IMR-90 (cell line): ENCODE measurements at regions of chr6 and their contacts with region 1.

Region 1: GRCh38 chr6:155738602-155739105 is 283.0 kb upstream of the NOX3 start:
- DNase-seq: no peak
- ATAC-seq: no peak
- H3K4me3 ChIP-seq: no peak overlapping the region
- H3K27ac ChIP-seq: no peak overlapping the region
- H3K4me1 ChIP-seq: 0 out of 2 replicates have a peak, but pooled peaks cover 2% of the 10 kb centered on the region
- H3K27me3 ChIP-seq: no peaks in the 10 kb centered on the region
- CTCF ChIP-seq: no peak
- POLR2A ChIP-seq: no peak
- RAD21 ChIP-seq: no peak

Region 2: DNA sequence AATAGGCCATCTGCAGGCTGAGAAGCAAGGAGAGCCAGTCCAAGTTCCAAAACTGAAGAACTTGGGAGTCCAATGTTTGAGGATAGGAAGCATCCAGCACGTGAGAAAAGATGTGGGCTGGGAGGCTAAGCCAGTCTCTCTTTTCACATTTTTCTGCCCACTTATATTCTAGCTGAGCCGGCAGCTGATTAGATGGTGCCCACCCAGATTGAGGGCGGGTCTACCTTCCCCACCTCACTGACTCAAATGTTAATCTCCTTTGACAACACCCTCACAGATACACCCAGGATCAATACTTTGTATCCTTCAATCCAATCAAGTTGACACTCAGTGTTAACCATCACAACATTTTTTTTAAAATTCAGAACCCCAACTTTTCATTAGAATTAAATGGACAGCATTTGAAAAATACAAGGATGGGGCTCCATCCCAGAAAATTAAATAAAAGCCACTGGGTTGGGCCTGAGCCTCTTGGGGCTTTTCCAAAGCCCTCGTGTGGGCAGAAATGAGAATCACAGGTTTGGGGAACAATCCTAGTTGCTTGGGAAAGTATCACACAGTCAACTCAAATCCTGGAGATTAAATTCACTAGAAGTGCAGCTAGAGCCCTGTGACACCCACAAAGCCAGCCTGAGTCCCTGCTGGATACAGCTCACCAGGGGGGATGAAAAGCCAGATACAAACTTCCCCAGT is 472.7 kb before region 1 on chr6:
- CTCF ChIA-PET with region 1: no interaction called
- POLR2A ChIA-PET with region 1: interaction called, 21 read pairs
- dilution Hi-C with region 1: no loop called
- in situ Hi-C with region 1: no loop called
- intact Hi-C with region 1: no loop called
- DNase-seq: no peak
- ATAC-seq: no peak
- H3K4me3 ChIP-seq: no peak overlapping the region
- H3K27ac ChIP-seq: no peak overlapping the region
- H3K4me1 ChIP-seq: peaks cover 2% of the 10 kb centered on the region; the same call in 1 of the 2 replicates
- H3K27me3 ChIP-seq: no peaks in the 10 kb centered on the region
- CTCF ChIP-seq: 0 out of 2 replicates have a peak, but pooled peaks have one; percentile 3
- POLR2A ChIP-seq: no peak
- RAD21 ChIP-seq: no peak